Naive thymus-derived CD4-positive, alpha-beta T cell (primary cell): ENCODE measurements at regions of chr7 and their contacts with region 1.

Region 1: DNA sequence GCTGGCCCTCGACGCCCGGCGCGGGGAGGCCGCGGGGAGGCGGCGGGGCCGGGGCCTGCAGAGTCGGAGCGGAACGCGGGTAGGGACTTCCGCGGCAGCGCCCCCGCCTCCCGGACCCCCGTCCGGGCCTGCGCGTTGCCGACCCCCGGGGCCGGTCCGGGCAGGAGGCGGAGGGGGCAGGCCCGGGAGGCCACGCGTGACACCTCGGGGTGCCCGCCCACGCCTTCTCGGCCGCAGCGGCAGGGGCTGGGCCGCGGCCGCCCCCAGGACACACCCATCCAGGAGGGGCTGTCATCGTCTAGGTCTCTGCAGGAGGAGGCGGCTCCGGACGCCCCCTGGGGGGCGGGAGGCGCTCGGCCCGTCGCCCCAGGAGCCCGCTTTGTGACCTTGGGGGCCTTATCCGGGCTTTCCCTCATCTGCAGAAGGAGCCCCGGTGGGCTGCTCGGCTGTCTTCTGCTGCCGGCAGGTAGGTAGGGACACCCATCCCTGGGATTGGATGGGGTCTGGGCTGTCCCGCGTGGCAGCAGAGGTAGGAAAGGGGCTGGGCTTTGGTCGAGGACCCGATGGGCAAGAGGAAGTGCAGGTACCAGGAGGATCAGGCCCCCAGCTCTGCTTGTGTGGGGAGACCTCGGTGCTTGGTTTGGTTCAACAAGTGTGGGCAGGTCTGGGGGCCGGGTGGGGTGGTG is 569 bp downstream of the ZNF316 start:
- DNase-seq: peak; percentile 23 to 72 (median 42)
- ATAC-seq: peak; percentile 73
- H3K4me3 ChIP-seq: peak overlapping the region; percentile 52
- H3K4me3 Mint-ChIP-seq: peak overlapping the region; percentile 81 to 90 (median 87)
- H3K27ac ChIP-seq: peak overlapping the region; percentile 76
- H3K27ac Mint-ChIP-seq: peak overlapping the region; percentile 76 to 95 (median 87)
- H3K4me1 ChIP-seq: peaks cover 10 to 14% of the 10 kb centered on the region in 2 donors
- H3K4me1 Mint-ChIP-seq: peaks cover 24 to 32% (median 27%) of the 10 kb centered on the region in 7 donors
- H3K27me3 ChIP-seq: no peaks in the 10 kb centered on the region
- H3K27me3 Mint-ChIP-seq: no peaks in the 10 kb centered on the region

Region 2: DNA sequence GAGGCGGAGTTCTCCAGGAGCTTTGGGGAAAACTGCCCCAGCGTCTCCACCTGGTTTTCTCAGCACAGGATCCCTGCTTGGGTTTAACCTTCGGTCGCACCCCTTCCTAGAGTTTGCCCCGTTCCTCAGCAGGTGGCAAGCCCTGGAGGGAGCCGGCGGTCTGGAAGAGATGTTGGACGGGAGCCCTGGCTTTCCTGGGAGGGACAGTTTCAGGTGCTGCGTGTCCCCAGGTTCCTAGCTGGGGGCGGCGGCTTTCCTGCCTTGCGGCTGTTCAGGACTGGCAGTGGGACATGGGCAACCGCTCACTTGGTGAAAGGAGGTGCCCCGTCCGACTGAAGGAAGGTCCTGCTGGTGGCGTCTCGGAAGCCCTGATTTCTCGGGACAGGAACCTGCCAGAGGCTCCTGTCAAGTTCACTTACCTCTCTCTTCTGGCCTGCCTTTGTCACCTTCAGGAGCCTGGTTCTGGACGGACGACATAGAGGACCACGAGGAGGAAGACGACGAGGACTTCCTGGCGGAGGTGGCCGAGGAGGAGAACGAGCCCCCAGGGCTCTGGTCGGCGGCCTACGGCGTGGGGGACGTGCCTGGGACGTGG is 14.3 kb after region 1 on chr7:
- CTCF ChIA-PET with region 1: no interaction called
- POLR2A ChIA-PET with region 1: no interaction called
- intact Hi-C with region 1: no loop called
- DNase-seq: no peak
- ATAC-seq: no peak
- H3K4me3 ChIP-seq: no peak overlapping the region
- H3K4me3 Mint-ChIP-seq: no peak overlapping the region
- H3K27ac ChIP-seq: no peak overlapping the region
- H3K27ac Mint-ChIP-seq: no peak overlapping the region
- H3K4me1 ChIP-seq: no peaks in the 10 kb centered on the region
- H3K4me1 Mint-ChIP-seq: no peaks in the 10 kb centered on the region
- H3K27me3 ChIP-seq: no peaks in the 10 kb centered on the region
- H3K27me3 Mint-ChIP-seq: no peaks in the 10 kb centered on the region

Region 3: DNA sequence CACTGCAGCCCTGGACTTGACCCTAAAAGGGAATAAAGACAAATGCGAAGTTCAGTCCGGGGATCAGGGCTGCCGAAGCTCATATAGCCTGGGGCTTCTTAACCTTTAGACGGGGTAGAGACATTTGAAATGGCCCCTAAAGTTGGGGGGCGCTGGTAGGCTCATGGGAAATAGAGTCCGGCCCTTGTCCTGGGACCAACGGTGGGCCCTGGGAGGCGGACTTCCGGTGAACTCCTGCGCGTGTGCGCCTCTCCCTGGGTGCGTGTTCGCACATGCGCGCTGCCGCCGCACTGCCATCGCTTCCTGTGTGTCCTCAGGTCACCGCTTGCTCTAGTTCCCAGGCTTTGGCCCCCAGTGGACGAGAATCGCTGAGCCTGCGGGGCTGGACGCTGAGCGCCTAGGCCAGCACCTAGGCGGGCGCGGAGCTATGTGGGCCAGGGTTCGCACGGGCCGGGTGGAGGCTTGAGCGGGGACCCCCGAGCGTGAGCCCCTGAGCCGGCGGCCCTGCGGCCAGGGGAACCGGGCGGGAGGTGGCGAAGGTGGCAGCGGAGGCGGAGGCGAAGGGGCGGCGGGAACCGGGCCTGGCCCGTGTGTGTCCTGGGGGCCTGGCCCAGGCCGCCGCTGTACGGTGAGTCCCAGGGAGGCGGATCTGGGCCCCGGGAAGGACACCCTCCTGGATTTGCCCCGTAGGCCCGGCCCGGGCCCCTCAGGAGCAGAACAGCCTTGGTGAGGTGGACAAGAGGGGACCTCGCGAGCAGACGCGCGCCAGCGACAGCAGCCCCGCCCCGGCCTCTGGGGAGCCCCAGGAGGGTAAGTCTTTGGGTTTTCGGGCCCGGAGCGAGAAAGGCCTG is 92.0 kb after region 1 on chr7:
- CTCF ChIA-PET with region 1: no interaction called
- POLR2A ChIA-PET with region 1: no interaction called
- intact Hi-C with region 1: loop called in 1 of 2 experiments (anchors 1 kb)
- DNase-seq: peak; percentile 68 to 84 (median 76)
- ATAC-seq: peak; percentile 97
- H3K4me3 ChIP-seq: peak overlapping the region; percentile 73
- H3K4me3 Mint-ChIP-seq: peak overlapping the region; percentile 91 to 99 (median 94)
- H3K27ac ChIP-seq: peak overlapping the region; percentile 91
- H3K27ac Mint-ChIP-seq: peak overlapping the region; percentile 88 to 96 (median 92)
- H3K4me1 ChIP-seq: peaks cover 4 to 8% of the 10 kb centered on the region in 2 donors
- H3K4me1 Mint-ChIP-seq: peaks cover 13 to 42% (median 26%) of the 10 kb centered on the region in 7 donors
- H3K27me3 ChIP-seq: no peaks in the 10 kb centered on the region
- H3K27me3 Mint-ChIP-seq: peaks cover 0 to 4% (median 0%) of the 10 kb centered on the region in 5 donors